Caki2 (cell line): ENCODE measurements at regions of chr20 and their contacts with region 1.

Region 1: GRCh38 chr20:18507218-18508021 is at the start of gene SEC23B:
- DNase-seq: peak; percentile 99
- total RNA-seq, gene SEC23B: 71.7 and 74.9 TPM in 2 replicates

Region 2: DNA sequence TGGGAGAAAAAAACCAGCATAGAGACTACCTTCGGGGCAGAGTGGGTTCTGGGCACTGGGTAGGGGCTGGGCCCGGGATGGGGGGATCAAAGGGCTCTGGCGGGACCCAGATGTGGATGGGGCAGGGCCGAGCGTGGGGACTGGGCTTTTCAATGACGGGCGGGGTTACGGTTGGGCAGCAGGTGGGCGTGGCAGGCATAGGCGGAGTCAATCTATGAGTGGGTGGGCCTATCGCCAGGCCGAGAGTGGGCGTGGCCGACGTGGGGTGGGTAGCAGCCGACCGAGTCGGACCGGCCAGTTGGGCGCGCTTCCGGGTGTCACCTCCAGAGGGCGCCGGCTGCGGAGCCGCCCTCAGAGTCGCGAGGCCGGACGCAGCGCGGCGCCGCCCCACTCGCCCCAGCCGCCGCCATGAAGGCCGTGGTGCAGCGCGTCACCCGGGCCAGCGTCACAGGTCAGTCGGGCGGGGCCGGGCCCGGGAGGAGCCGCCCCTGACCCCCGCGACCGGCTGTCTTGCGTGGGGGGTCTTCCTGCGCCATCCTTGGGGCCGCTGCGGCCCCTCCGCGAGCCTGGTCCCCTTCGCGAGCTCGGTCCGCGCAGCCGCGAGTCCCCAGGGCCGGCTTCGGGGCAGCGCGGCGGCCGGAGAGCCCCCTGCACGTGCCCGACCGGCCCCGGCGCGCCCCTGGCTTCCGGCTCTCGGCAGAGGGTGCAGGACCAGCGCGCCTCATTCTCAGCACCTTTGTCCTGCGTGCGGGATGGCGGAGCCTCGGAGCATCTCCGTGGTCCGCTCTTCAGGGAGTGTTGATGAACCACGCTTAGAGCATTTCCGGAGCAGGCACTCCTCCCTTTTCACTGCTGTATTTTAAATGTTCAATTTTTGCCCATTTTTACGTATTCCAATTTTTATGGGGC is 80.5 kb after region 1 on chr20 and contains the start of gene DTD1:
- in situ Hi-C with region 1: loop called (anchors 5 kb)
- DNase-seq: peak; percentile 89
- total RNA-seq, gene DTD1: 208 and 236 TPM in 2 replicates

Region 3: GRCh38 chr20:18613556-18613955 is 106.1 kb after region 1 on chr20:
- in situ Hi-C with region 1: no loop called
- DNase-seq: peak; percentile 52